ENCODE measurements at regions of chr20 and their contacts with region 1.

Region 1: DNA sequence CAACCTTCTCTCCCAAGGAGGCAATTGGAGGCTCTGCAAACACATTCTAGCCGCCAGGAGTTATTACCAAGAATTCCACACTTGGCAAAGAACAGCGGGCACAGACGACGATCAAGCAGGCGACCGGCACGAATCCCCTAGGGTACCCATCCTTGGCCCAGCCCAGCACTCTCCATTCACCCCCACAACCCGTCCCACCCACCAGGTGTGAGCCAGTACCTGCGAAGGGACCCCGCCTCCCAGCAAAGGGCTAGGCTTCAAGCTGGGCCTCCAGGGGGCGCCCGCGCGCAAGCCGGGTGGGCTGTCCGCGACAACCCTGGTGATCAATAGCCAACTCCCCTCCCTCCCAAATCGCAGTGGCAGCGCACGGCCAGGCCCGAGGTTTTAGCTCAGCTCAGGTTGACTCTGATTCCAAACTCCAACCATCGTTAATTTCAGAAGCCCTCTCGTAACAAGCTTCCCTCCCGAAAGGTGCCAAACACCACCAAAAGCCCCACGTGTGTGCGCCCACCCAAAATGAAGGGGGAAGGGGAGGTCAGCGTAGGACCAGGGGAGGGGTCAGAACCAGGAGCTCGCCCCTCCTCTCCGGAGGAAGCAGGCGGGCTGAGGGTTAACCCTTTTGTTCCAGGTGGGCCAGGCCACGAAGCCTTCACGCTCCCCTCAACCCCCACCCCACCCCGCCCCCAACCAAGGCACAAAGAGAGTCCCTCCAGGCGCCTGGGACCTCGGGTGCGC is 2.1 kb downstream of the SALL4 start:
- DNase-seq: peak; percentile 90
- H3K4me3 Mint-ChIP-seq: peak overlapping the region; percentile 74
- H3K27ac Mint-ChIP-seq: no peak overlapping the region
- H3K4me1 Mint-ChIP-seq: peaks cover 2% of the 10 kb centered on the region
- H3K27me3 Mint-ChIP-seq: peaks cover 60% of the 10 kb centered on the region

Region 2: GRCh38 chr20:51639206-51639832 is 160.9 kb before region 1 on chr20:
- intact Hi-C with region 1: loop called (anchors 2 kb)
- DNase-seq: peak; percentile 82
- H3K4me3 Mint-ChIP-seq: no peak overlapping the region
- H3K27ac Mint-ChIP-seq: no peak overlapping the region
- H3K4me1 Mint-ChIP-seq: peaks cover 3% of the 10 kb centered on the region
- H3K27me3 Mint-ChIP-seq: peaks cover 2% of the 10 kb centered on the region

Region 3: DNA sequence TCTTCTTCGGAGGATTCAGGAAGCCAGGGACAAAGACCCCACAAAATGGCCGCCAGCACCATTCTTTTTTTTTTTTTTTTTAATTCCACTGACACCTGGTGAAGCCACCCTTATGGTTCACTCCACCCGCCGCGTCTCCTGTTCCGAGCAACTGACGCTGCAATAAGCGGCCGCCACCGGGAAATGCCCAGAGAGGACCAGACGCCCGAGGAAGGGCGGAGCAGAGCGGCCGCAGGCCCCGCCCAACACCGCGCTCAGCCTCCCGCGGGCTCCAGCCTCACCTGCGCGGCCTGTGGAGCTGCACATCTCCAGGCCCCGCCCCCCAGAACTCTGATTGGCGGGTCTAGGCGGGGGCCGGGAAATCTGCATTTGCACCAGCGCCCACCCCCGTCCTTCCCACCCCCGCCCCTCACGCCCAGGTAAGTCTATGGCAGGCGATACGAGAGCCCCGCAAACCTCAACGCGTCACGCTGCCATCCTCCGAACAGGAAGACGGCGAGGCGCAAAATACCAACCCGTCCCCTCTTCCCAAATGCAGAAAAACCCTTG is 33.1 kb before region 1 on chr20:
- intact Hi-C with region 1: loop called (anchors 5 kb)
- DNase-seq: peak; percentile 87
- H3K4me3 Mint-ChIP-seq: peak overlapping the region; percentile 75
- H3K27ac Mint-ChIP-seq: peak overlapping the region; percentile 31
- H3K4me1 Mint-ChIP-seq: peaks cover 5% of the 10 kb centered on the region
- H3K27me3 Mint-ChIP-seq: peaks cover 36% of the 10 kb centered on the region

Measured in activated CD4-positive, alpha-beta T cell treated with anti-CD3 and anti-CD28 coated beads, Interleukin-2, amount 10 ng/mL, durations not matched to agents 24 days and 14 days (primary cell).